ENCODE measurements at regions of chr19 and their contacts with region 1.

Region 1: DNA sequence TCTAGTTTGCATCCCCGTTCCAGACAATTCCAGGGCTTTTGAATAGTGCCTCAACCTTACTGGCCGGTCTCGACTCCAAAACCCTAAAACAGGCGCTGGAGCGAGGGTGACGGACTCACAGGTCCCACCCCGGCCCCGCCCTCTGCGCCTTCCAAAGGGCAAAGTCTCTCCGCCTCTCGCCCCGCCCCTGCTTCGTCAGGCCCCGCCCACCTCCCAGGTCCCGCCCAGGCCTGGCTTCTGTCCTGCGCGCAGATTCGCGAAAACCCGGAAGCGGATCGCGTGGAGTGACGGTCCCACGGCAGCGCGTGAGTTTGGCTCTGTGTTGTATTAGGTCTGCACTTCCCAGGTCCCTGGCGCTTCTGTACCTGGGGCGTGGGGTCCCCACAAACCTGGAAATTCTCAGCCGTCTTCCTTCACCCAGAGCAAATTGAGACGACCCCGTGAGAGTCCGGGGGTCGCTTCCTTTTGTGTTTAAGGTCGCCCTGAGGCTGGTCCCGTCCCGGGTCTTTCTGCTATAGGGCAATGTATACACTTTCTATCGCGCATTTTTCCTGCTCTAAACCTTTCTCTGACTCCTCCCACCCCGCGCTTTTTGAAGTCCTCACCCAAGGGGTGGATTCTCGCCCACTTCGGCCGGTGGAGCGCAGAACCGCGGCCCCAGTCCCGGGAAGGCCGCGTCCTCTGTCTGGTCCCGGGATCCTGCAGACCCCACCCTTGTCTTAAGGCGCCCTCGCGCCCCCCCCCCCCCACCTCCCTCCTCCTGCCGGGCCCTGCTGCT is at the start of gene ZNF813:
- DNase-seq: peak; percentile 81 to 95 (median 92)
- ATAC-seq: peak; percentile 100
- H3K4me3 ChIP-seq: peak within 1 kb of the TSS; percentile 74
- H3K4me3 Mint-ChIP-seq: peak within 1 kb of the TSS; percentile 88 to 96 (median 94)
- H3K27ac ChIP-seq: peak within 1 kb of the TSS; percentile 73
- H3K27ac Mint-ChIP-seq: peak within 1 kb of the TSS; percentile 76 to 96 (median 90)
- H3K4me1 ChIP-seq: no peaks in the 10 kb centered on the region
- H3K4me1 Mint-ChIP-seq: peaks cover 20 to 45% (median 31%) of the 10 kb centered on the region in 7 donors
- H3K27me3 ChIP-seq: no peaks in the 10 kb centered on the region
- H3K27me3 Mint-ChIP-seq: peaks cover 0 to 24% (median 12%) of the 10 kb centered on the region in 5 donors
- total RNA-seq, gene ZNF813: 2.5 to 11.2 (median 4.6) TPM

Region 2: GRCh38 chr19:53431399-53432087 is 36.1 kb before region 1 on chr19 and contains the start of gene ZNF761:
- CTCF ChIA-PET with region 1: interaction called, 3 read pairs
- POLR2A ChIA-PET with region 1: no interaction called
- intact Hi-C with region 1: loop called (anchors 1 kb)
- DNase-seq: peak; percentile 94 to 99 (median 98)
- ATAC-seq: peak; percentile 100
- H3K4me3 ChIP-seq: peak within 1 kb of the TSS; percentile 91
- H3K4me3 Mint-ChIP-seq: peak within 1 kb of the TSS; percentile 94 to 99 (median 97)
- H3K27ac ChIP-seq: peak within 1 kb of the TSS; percentile 79
- H3K27ac Mint-ChIP-seq: peak within 1 kb of the TSS; percentile 90 to 99 (median 96)
- H3K4me1 ChIP-seq: peaks cover 6 to 16% of the 10 kb centered on the region in 2 donors
- H3K4me1 Mint-ChIP-seq: peaks cover 20 to 55% (median 35%) of the 10 kb centered on the region in 7 donors
- H3K27me3 ChIP-seq: no peaks in the 10 kb centered on the region
- H3K27me3 Mint-ChIP-seq: no peaks in the 10 kb centered on the region
- total RNA-seq, gene ZNF761: 8.0 to 18.8 (median 13.1) TPM

Measured in naive thymus-derived CD4-positive, alpha-beta T cell (primary cell).